Activated CD4-positive, alpha-beta T cell treated with anti-CD3 and anti-CD28 coated beads, Interleukin-2, amount 10 ng/mL, durations not matched to agents 24 days and 14 days (primary cell): ENCODE measurements at regions of chr11 and their contacts with region 1.

Region 1: GRCh38 chr11:43868852-43869567 is 11.6 kb upstream of the ALKBH3 start:
- DNase-seq: peak; percentile 89
- H3K4me3 Mint-ChIP-seq: peak overlapping the region; percentile 66
- H3K27ac Mint-ChIP-seq: peak overlapping the region; percentile 76
- H3K4me1 Mint-ChIP-seq: peaks cover 28% of the 10 kb centered on the region
- H3K27me3 Mint-ChIP-seq: peaks cover 60% of the 10 kb centered on the region

Region 2: GRCh38 chr11:43643898-43644620 is 225.0 kb before region 1 on chr11:
- intact Hi-C with region 1: loop called (anchors 1 kb)
- DNase-seq: peak; percentile 96
- H3K4me3 Mint-ChIP-seq: peak overlapping the region; percentile 94
- H3K27ac Mint-ChIP-seq: peak overlapping the region; percentile 87
- H3K4me1 Mint-ChIP-seq: peaks cover 11% of the 10 kb centered on the region
- H3K27me3 Mint-ChIP-seq: peaks cover 15% of the 10 kb centered on the region

Region 3: DNA sequence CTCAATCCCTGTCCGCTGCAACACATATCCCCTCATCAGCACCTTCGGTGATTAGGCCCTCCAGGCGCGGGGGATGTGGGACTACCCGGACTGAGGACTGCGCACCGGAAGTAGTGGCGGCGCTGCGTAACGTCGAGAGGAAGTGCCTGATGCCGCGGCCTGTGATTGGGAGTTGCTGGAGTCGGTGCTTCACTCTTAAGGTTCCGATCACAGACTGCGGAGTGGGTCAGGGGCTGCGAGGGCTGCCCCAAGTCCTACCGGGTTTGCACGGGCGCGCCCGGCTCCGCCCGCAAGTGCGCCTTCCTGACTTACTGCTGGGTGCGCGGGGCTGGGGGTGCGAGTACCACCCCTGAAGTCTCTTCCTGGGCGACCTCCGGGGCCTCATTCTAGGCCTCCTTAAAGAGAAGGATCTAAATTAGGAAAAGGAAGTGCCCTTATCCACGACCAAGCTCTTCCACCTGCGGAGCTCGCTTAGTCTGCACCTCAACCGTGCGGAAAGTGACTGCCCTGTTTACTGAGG is 11.7 kb after region 1 on chr11 and contains the start of gene ALKBH3:
- intact Hi-C with region 1: loop called (anchors 1 kb)
- DNase-seq: peak; percentile 97
- H3K4me3 Mint-ChIP-seq: peak within 1 kb of the TSS; percentile 93
- H3K27ac Mint-ChIP-seq: peak within 1 kb of the TSS; percentile 90
- H3K4me1 Mint-ChIP-seq: peaks cover 14% of the 10 kb centered on the region
- H3K27me3 Mint-ChIP-seq: peaks cover 12% of the 10 kb centered on the region
- total RNA-seq, gene ALKBH3: 38.3 and 41.4 TPM in 2 replicates

Region 4: DNA sequence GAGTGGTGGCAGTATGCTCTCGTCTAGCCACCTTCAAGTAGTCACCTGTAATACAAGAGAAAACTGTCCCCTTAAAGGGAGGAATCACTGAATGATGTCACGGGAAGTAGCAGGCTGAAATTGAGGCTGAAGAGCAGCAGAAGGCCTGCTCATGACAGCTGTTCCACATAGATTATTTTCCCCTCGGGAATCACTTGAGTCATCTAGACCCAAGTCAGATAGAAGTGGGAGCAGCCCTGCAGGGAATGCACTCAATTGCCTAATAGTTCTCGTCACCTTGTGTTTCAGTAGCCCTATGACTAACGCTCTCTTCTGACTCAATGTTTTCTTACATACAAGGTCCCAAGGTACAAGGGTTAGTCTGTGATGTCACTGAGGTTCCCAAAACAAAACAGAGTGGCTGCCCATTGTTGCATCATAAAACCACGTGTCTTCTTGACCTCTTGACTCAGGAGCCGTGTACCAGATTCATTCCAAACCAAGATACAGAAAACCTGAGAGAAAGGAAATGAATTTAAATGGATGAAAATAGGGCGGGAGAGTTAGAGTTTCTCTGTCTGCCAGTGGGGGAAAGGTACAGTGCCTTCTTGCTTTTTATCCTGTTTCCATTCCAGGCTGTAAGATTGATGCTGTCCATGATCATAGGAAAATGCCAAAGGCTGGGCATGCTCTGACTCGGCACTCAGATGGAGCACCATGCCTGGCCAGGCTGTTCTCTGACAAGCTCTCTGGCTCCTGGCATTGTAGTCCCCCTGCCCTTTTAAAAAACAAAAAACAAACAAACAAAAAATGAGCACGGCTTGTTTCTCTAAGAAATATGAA is 51.8 kb after region 1 on chr11:
- intact Hi-C with region 1: loop called (anchors 1 kb)
- DNase-seq: peak; percentile 61
- H3K4me3 Mint-ChIP-seq: no peak overlapping the region
- H3K27ac Mint-ChIP-seq: peak overlapping the region; percentile 34
- H3K4me1 Mint-ChIP-seq: peaks cover 12% of the 10 kb centered on the region
- H3K27me3 Mint-ChIP-seq: no peaks in the 10 kb centered on the region